ENCODE measurements at regions of chr11 and their contacts with region 1.

Region 1: GRCh38 chr11:44727373-44728287 is 868 bp downstream of the TSPAN18 start:
- DNase-seq: peak; percentile 76 to 84 (median 83)
- ATAC-seq: peak; percentile 89
- H3K4me3 ChIP-seq: no peak overlapping the region
- H3K4me1 ChIP-seq: peaks cover 8% of the 10 kb centered on the region
- CTCF ChIP-seq: peak; percentile 98

Region 2: GRCh38 chr11:44416776-44417175 is 310.9 kb before region 1 on chr11:
- intact Hi-C with region 1: no loop called
- DNase-seq: no peak
- ATAC-seq: no peak
- H3K4me3 ChIP-seq: no peak overlapping the region
- H3K4me1 ChIP-seq: no peaks in the 10 kb centered on the region
- CTCF ChIP-seq: no peak

Region 3: GRCh38 chr11:44621140-44621681 is 106.4 kb before region 1 on chr11:
- intact Hi-C with region 1: loop called in 1 of 2 experiments (anchors 10 kb)
- DNase-seq: peak in 2 of 3 donors; percentile 81 to 87
- ATAC-seq: peak; percentile 86
- H3K4me3 ChIP-seq: no peak overlapping the region
- H3K4me1 ChIP-seq: peaks cover 4% of the 10 kb centered on the region
- CTCF ChIP-seq: peak; percentile 94

Region 4: DNA sequence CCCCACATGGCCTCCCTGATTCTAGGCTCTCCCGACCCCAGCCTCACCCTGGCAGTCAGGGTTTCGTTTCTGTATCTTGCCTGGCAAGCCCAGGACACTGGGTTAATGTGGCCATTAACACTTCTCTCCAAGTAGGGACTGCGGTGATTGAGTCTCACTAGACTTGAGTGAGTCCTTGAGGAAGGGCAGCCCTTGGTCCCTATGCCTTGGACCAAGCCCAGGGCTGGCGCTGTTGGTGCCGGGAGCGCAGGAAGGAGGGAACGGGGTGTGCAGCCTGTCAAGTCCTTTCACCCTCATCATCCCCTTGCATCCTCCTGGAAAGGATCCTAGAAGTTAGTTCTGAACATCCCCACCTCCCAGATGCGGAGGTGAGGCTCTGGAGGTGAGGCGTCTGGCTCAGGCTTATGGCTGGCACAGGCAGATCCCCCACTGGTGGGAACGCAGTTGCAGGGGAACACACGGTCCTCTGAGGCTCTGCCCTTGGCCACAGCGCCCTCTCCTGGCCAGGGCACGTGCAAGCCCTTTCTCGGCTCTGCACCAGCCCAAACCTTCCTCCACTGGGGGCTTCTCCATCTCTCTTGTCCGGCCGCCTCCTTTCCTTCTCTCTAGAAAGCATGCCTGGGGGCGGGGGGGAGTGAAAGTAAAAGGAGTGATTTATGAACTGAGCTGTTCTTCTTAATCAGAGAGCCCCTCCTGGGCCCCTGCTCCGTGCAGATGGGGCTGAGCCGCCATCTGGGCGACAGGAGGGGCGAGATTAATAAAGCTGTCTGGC is 166.4 kb after region 1 on chr11:
- intact Hi-C with region 1: loop called in 1 of 2 experiments (anchors 5 kb)
- DNase-seq: peak; percentile 43 to 63 (median 61)
- ATAC-seq: peak; percentile 75
- H3K4me3 ChIP-seq: no peak overlapping the region
- H3K4me1 ChIP-seq: no peaks in the 10 kb centered on the region
- CTCF ChIP-seq: peak; percentile 41

Region 5: GRCh38 chr11:45635907-45636306 is 908.3 kb after region 1 on chr11:
- intact Hi-C with region 1: no loop called
- DNase-seq: no peak
- ATAC-seq: no peak
- H3K4me3 ChIP-seq: no peak overlapping the region
- H3K4me1 ChIP-seq: no peaks in the 10 kb centered on the region
- CTCF ChIP-seq: no peak